ENCODE measurements at regions of chr20 and their contacts with region 1.

Region 1: GRCh38 chr20:45971675-45972499 is at the start of gene ZNF335:
- DNase-seq: peak; percentile 93
- H3K4me3 ChIP-seq: peak within 1 kb of the TSS; percentile 97
- H3K27ac ChIP-seq: peak within 1 kb of the TSS; percentile 100
- H3K27me3 ChIP-seq: no peaks in the 10 kb centered on the region
- CTCF ChIP-seq: peak; percentile 25; the same call in 1 of the 2 replicates
- polyA plus RNA-seq, gene ZNF335: 5.5 and 7.6 TPM in 2 replicates

Region 2: DNA sequence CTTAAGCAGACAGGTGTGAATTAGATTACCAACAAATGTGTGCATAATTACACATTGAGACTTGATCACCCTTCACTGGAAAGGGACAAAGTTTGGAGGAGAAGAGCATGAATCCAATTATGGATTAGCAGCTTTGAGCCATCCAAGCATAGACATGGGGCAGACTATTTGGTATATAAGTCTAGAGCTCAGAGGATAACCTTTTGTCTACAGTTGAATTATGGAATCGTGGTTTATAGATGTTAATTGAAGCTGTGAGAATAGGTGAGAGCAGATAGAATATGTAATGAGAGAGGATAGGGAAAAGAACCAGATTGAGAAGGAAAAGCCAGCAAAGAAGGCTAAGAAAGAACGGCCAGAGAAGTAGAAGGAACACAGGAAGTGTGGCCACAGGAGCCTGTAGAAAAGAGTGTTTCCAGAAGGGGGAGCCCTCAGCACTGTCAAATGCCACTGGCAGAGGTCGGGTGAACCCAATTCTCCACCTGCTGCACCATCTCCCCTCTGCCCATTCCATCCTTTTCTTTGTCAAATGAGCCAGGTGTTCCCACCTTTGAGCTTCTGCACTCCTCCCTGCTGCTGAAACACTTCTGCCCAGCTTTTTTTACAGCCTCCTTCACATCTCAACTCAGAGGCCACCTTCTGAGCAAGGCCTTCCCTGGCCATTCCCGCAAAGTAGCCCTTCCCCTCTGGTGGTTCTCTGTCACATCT is 172.8 kb before region 1 on chr20:
- CTCF ChIA-PET with region 1: interaction called, 25 read pairs
- POLR2A ChIA-PET with region 1: no interaction called
- DNase-seq: no peak
- H3K4me3 ChIP-seq: no peak overlapping the region
- H3K27ac ChIP-seq: no peak overlapping the region
- H3K27me3 ChIP-seq: no peaks in the 10 kb centered on the region
- CTCF ChIP-seq: peak; percentile 79

Region 3: DNA sequence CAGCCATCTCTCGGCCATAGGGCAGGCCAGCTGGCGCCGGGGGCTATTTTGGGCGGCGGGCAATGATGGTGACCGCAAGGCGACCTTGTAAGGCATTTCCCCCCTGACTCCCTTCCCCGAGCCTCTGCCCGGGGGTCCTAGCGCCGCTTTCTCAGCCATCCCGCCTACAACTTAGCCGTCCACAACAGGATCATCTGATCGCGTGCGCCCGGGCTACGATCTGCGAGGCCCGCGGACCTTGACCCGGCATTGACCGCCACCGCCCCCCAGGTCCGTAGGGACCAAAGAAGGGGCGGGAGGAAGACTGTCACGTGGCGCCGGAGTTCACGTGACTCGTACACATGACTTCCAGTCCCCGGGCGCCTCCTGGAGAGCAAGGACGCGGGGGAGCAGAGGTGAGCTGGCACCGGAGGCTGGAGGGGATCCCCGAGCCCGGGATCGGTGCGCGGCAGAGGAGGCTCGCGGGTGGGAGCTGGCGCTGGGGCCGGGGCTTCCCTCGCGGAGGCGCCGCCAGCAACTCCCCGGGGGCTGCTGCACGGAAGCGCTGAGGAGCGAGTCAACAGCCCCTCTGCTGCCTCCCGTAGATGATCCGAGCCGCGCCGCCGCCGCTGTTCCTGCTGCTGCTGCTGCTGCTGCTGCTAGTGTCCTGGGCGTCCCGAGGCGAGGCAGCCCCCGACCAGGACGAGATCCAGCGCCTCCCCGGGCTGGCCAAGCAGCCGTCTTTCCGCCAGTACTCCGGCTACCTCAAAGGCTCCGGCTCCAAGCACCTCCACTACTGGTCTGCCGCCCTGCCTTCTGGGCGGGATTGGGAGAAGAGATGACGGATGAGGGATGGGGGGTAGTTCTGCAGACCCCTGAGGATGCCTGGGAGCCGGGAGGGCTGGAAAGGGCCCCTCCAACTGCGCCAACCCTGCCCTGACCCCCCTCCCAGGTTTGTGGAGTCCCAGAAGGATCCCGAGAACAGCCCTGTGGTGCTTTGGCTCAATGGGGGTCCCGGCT is 80.6 kb before region 1 on chr20 and contains the starts of genes CTSA and NEURL2:
- CTCF ChIA-PET with region 1: interaction called, 31 read pairs
- POLR2A ChIA-PET with region 1: no interaction called
- DNase-seq: peak; percentile 84
- H3K4me3 ChIP-seq: peak within 1 kb of the TSS; percentile 79
- H3K27ac ChIP-seq: peak within 1 kb of the TSS; percentile 77
- H3K27me3 ChIP-seq: no peaks in the 10 kb centered on the region
- CTCF ChIP-seq: no peak
- polyA plus RNA-seq, gene CTSA: 234 and 267 TPM in 2 replicates
- polyA plus RNA-seq, gene NEURL2: 1.1 and 1.9 TPM in 2 replicates

Region 4: DNA sequence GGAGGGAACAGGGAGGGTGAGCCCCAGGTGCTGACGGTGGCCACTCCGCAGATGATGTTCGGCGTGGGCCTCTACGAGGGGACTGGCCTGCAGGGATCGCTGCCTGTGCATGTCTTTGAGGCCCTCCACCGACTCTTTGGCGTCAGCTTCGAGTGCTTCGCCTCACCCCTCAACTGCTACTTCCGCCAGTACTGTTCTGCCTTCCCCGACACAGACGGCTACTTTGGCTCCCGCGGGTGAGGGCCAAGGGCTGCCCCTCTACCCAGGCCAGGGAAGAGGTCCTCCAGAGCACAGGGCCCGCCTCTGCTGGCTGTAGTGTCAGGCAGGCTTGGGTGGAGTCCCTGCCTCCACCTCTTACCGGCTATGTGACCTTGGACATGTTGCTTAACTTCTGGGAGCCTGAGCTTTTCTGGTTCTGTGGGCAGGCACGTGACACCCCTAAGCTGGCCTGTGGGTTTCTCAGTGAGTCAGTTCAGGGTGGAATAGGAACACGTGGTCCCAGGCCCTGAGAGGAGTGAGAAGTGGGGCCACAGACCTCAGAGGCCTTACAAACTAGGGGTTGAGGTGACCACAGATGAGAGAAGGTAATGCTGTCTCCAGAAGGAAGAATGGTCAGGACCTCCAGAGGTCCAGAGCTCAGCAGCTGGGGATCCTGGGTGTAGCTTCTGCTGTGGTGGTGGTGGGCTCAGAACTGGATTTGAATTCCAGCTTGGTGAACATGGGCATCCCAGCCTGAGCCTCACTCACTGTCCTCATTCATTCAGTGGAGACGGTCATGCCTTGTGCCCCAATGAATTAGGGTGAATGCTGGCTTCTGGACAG is 25.5 kb before region 1 on chr20:
- CTCF ChIA-PET with region 1: interaction called, 17 read pairs
- POLR2A ChIA-PET with region 1: interaction called, 6 read pairs
- DNase-seq: no peak
- H3K4me3 ChIP-seq: no peak overlapping the region
- H3K27ac ChIP-seq: peak overlapping the region; percentile 2
- H3K27me3 ChIP-seq: no peaks in the 10 kb centered on the region
- CTCF ChIP-seq: no peak

Region 5: DNA sequence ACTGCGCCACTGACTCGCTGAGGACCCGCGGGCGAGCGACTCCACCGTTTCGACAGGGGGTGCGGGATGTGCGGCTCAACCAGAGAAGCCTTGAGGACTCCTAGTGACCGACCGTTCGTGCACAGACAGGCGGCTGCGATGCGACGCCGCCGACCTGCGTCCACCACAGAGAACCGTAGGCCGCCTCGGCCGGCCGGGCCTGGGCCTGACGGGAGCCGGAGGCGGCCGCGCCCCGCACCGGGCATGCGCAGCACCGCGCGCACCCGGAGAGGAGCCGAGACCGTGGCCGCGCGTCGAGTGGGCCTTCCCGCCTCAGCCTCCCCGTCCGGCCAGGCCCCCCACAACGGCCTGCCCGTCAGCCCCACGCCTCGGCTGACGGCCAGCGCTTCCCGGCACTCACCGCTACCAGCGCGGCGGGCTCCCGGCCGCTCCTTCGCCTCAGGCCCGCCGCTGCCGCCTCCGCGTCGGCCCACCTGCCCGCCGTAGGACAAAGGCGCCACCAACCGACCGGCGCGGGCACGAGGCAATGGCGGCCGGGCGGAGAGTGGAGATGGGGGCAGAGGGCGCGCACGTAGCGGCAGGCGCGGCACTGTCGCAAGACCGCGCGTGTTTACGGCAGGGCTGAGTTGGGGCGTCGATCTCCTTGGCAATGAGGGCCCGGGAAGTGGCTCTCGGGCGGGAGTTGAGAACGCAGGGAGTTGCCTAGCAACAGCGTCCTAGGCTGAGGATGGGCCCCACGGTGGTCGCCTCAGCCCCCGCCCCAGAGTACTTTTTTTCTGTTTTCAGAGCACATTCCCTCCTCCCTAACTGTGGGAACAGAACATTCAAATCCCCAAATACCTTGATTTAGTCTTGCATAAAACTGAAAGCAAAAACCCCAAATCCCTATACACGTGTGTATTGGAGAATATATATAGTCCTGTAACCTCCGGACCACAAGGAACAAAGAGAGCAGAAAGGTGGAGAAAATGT is 117.8 kb after region 1 on chr20 and contains the start of gene NCOA5:
- CTCF ChIA-PET with region 1: interaction called, 11 read pairs
- POLR2A ChIA-PET with region 1: no interaction called
- DNase-seq: peak; percentile 86
- H3K4me3 ChIP-seq: peak within 1 kb of the TSS; percentile 70
- H3K27ac ChIP-seq: peak within 1 kb of the TSS; percentile 69
- H3K27me3 ChIP-seq: no peaks in the 10 kb centered on the region
- CTCF ChIP-seq: peak; percentile 5; the same call in 1 of the 2 replicates
- polyA plus RNA-seq, gene NCOA5: 21.5 and 27.0 TPM in 2 replicates

Measured in AG04450 (cell line).